GM23248 (cell line): ENCODE measurements at regions of chr4 and their contacts with region 1.

Region 1: DNA sequence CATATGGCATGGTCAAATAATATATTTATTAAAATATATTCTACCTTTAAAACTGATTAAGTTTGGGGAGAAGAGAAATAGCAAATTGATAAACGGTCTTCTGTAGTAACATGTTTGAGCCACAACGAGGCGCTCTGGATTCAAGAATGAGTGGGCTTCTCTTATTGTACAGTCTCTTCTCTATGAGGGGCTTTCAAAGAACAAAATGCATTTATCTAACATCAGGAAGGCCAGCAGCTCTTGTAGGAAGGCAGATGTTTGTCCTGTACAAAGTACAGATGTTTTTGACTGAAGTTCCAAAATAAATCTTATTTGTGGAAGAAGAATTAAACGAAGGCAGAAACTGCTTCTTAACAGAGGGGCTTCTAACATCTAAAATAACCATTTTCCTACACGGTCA is 153.6 kb downstream of the RASL11B start:
- DNase-seq: peak; percentile 70
- H3K4me3 ChIP-seq: no peak overlapping the region
- H3K27ac ChIP-seq: peak overlapping the region; percentile 43
- H3K4me1 ChIP-seq: peaks cover 74% of the 10 kb centered on the region
- H3K27me3 ChIP-seq: no peaks in the 10 kb centered on the region

Region 2: GRCh38 chr4:53365486-53366300 is 350.0 kb after region 1 on chr4 and contains the start of gene SCFD2:
- in situ Hi-C with region 1: loop called (anchors 25 kb)
- DNase-seq: peak; percentile 98
- H3K4me3 ChIP-seq: peak within 1 kb of the TSS; percentile 89
- H3K27ac ChIP-seq: peak within 1 kb of the TSS; percentile 41
- H3K4me1 ChIP-seq: peaks cover 27% of the 10 kb centered on the region
- H3K27me3 ChIP-seq: no peaks in the 10 kb centered on the region
- total RNA-seq, gene SCFD2: 33.2 and 36.3 TPM in 2 replicates

Region 3: DNA sequence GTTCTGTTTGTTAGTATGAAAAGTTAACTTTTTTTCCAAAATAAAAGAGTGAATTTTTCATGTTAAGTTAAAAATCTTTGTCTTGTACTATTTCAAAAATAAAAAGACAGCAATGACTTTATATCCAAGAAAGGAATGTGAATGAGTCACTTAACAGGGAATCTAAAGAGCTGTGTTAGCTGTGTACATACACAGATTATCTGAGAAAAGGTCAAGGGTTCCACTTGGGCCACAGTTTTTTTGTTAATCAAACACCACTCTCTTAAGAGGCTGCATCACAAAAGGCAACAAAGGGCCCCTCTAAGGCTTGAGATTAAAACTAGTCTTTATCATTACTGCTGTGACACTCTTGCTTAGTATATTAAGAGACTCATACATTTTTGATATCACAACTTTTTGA is 443.9 kb after region 1 on chr4:
- in situ Hi-C with region 1: no loop called
- DNase-seq: peak; percentile 65
- H3K4me3 ChIP-seq: no peak overlapping the region
- H3K27ac ChIP-seq: no peak overlapping the region
- H3K4me1 ChIP-seq: peaks cover 31% of the 10 kb centered on the region
- H3K27me3 ChIP-seq: no peaks in the 10 kb centered on the region

Region 4: DNA sequence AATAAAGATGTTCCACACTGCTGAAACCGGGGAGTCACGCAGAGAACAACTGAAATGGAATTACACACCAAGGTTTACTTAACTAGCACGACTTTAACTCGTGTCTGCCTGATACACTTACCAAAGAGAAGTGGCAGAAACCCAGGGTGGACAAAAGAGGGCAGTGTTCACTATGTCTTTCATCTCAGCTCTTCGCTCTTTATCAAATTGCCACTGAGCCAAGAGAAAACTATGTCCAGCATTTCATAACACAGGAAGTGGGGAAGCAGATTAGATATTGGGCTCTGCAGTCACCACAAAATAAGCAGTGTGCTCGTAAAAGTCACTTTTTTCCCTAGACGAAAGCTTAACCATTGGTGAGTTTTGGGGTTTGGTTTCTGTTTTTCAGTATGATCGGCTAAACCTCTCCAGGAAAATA is 893.0 kb after region 1 on chr4:
- in situ Hi-C with region 1: loop called (anchors 25 kb)
- DNase-seq: peak; percentile 89
- H3K4me3 ChIP-seq: peak overlapping the region; percentile 66
- H3K27ac ChIP-seq: peak overlapping the region; percentile 66
- H3K4me1 ChIP-seq: peaks cover 49% of the 10 kb centered on the region
- H3K27me3 ChIP-seq: no peaks in the 10 kb centered on the region